Heart left ventricle (tissue), 16 donors: ENCODE measurements at regions of chr9 and their contacts with region 1.

Region 1: DNA sequence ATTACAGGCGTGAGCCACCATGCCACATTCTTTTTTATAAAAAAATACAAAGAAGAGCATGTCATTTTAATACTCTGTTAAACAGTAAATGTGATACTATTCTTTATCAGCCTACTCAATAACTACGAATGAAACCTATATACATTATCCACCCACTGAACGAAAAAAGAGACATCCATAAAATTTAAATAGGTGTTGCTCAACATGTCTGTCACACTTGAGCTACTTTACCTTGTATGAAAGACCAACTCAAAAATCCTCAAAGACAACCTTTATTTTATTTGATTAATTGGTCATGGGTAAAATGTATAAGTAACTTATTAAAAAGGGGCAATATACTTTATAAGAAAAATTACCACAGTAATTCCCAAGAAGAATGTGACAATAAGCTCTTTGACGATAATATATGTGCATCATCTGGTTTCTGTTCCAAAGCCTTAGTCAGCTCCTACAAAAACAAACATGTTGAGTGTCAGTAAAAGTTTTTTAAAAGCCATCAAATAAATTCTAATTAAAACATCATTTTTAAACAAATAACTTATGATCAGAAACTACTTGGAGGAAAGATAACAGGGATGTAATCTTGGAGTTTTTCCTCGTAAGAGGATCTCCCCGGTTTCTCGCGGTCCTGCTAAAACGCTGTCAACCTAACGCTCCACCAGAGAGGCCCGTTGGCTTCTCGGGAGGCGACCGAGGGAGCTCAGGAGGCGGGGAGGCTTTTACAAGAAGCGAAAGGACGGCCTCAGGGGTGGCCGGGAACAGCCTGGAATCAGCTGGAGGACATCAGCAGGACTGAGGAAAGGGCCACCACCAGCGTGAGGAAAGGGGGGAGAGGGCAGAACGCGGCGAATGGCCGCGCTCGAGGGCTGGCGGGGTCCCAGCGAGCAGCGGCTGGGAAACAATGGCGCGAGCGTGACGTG is 13.5 kb upstream of the ANKRD18B start:
- DNase-seq: peak; percentile 69 to 85 (median 77)
- ATAC-seq: peak; percentile 85 to 97 (median 92)
- H3K4me3 ChIP-seq: peak overlapping the region; percentile 12 to 74 (median 61)
- H3K27ac ChIP-seq: peak overlapping the region in 11 of 12 donors; percentile 69 to 92 (median 81)
- H3K4me1 ChIP-seq: peaks cover 0 to 13% (median 7%) of the 10 kb centered on the region in 12 donors
- H3K27me3 ChIP-seq: no peaks in the 10 kb centered on the region
- CTCF ChIP-seq: no peak
- POLR2A ChIP-seq: peak in 1 of 2 donors; percentile 32

Region 2: GRCh38 chr9:33473643-33474352 is 36.7 kb before region 1 on chr9 and contains the start of gene NOL6:
- intact Hi-C with region 1: loop called in 1 of 10 experiments (anchors 2 kb)
- DNase-seq: peak; percentile 97 to 99 (median 98)
- ATAC-seq: peak; percentile 100
- H3K4me3 ChIP-seq: peak within 1 kb of the TSS; percentile 56 to 97 (median 76)
- H3K27ac ChIP-seq: peak within 1 kb of the TSS; percentile 31 to 82 (median 72)
- H3K4me1 ChIP-seq: peaks cover 0 to 24% (median 18%) of the 10 kb centered on the region in 12 donors
- H3K27me3 ChIP-seq: no peaks in the 10 kb centered on the region
- CTCF ChIP-seq: no peak
- POLR2A ChIP-seq: peak in 1 of 2 donors; percentile 56
- total RNA-seq, gene NOL6: 11.2 to 22.1 (median 14.9) TPM